Sciatic nerve (tissue), 2 donors: ENCODE measurements at regions of chr17 and their contacts with region 1.

Region 1: GRCh38 chr17:47840740-47841603 is at the start of gene SCRN2:
- DNase-seq: peak; percentile 94
- ATAC-seq: peak; percentile 93
- total RNA-seq, gene SCRN2: 39.4 TPM

Region 2: DNA sequence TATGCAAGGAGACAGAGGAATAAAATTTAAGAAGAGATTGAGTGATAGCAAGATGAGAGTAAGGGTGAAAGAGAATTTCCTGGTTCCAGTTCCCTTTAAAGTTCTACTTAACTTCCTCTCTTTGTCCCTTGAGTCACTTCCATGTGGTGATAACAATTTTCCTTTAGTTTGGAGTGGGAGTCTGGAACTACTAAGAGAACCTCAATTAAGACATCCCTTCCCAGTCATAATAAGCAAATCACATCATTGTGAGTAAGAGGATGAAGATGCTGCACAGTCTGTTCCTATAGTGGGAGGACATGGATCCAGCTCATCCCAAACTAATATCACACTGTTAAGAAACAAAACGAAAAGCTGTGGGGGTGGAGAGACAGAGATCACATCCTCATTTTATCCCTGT is 83.6 kb before region 1 on chr17:
- intact Hi-C with region 1: no loop called
- DNase-seq: no peak
- ATAC-seq: no peak

Region 3: GRCh38 chr17:47889734-47890529 is 49.0 kb after region 1 on chr17:
- intact Hi-C with region 1: loop called (anchors 5 kb)
- DNase-seq: peak; percentile 94
- ATAC-seq: peak; percentile 91

Region 4: DNA sequence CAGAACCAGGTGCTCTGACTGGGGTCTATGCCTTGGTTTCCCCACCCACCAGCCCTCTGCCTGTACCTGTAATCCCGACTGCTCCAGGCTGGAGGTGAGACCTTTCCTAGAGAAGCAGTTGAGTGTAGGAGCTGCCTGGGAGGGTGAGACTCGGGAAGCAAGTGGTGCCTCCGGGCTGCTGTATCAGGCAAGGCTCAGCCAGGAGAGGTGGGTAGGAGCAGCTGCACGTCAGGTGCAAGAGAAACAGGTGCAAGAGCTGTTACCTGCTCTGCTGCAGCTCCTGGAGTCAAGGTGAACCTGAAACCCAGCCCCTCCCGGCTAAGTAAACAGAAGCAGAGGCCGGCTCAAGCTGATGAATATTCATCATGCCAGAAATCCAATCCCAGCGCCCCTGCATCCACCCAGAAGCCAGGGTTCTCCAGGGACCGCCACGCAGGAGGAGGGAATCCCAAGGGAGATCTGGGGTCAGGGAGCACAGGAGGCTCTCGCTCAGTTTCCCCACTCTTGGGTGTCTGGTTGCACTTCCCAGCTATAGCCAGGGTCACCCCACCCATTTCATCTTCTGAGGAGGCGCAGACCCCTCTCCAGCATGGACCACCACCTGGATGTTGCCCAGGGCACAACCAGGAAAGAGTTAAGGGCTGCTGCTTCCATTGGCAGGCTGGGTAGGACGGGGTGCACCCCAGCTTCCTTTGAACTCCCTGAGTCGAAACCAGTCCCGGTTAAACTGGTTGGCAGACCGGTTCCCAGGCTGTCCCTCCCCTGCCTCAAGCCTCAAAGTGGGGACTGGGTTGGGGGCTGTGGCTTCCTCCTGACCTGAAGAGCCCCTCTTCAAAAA is 116.8 kb after region 1 on chr17 and contains the start of gene PRR15L:
- intact Hi-C with region 1: loop called (anchors 10 kb)
- DNase-seq: no peak
- ATAC-seq: no peak
- total RNA-seq, gene PRR15L: not detected

Region 5: DNA sequence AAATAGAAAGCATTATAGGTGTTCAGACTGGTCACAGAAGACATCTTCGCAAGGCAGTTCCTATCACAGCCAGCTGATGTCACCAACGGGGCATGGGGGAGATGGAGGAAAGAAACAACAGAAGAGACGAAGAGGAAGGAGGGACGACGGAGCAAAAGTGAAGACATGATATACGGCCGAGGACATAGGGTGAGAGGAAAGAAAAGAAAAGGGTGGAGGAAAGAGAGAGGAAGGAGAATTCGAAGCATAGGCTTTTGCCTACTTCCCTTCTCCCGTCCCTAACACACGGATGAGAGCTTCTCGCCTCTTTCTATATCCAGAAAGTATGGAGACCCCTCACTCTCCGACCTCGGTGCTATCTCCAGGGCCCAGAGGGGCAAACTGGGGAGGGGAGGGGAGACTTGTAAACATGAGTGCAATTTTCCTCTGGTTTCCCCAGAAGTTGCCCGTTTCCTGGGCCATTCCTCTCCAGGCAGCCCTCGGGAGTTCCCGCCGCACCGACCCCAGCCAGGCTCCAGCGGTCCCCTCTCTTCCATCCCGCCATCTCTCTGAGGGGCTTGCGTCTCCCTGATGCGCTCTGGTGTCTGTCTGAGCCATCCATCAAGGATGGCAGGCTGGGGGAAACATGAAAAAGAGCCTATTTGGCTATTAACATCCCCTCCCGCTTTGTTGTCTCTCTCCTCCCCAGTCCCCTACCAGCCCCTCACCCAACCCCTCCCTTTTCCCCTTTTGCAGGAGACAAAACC is 170.6 kb after region 1 on chr17:
- intact Hi-C with region 1: loop called (anchors 10 kb)
- DNase-seq: no peak
- ATAC-seq: peak; percentile 51